ENCODE measurements at regions of chr6 and their contacts with region 1.

Region 1: GRCh38 chr6:30616811-30617564 is at the start of gene PPP1R10:
- DNase-seq: peak; percentile 98 to 100 (median 100)
- H3K4me3 ChIP-seq: peak within 1 kb of the TSS; percentile 91 to 95
- H3K4me3 Mint-ChIP-seq: peak within 1 kb of the TSS; percentile 97 to 100 (median 100)
- H3K27ac ChIP-seq: peak within 1 kb of the TSS; percentile 94
- H3K27ac Mint-ChIP-seq: peak within 1 kb of the TSS; percentile 100
- H3K4me1 ChIP-seq: peaks cover 45% of the 10 kb centered on the region
- H3K4me1 Mint-ChIP-seq: peaks cover 22 to 62% (median 35%) of the 10 kb centered on the region in 4 donors
- H3K27me3 ChIP-seq: no peaks in the 10 kb centered on the region
- H3K27me3 Mint-ChIP-seq: peaks cover 0 to 1% of the 10 kb centered on the region in 2 donors
- total RNA-seq, gene PPP1R10: 224 to 231 TPM

Region 2: GRCh38 chr6:30489081-30490025 is 127.6 kb before region 1 on chr6 and contains the start of gene HLA-E:
- CTCF ChIA-PET with region 1: interaction called, 22 read pairs
- POLR2A ChIA-PET with region 1: interaction called, 94 read pairs
- intact Hi-C with region 1: loop called (anchors 1 kb)
- DNase-seq: peak; percentile 92 to 98 (median 96)
- H3K4me3 ChIP-seq: peak within 1 kb of the TSS; percentile 98 to 99
- H3K4me3 Mint-ChIP-seq: peak within 1 kb of the TSS; percentile 98 to 99 (median 99)
- H3K27ac ChIP-seq: peak within 1 kb of the TSS; percentile 95
- H3K27ac Mint-ChIP-seq: peak within 1 kb of the TSS; percentile 97 to 99 (median 99)
- H3K4me1 ChIP-seq: peaks cover 30% of the 10 kb centered on the region
- H3K4me1 Mint-ChIP-seq: peaks cover 28 to 60% (median 44%) of the 10 kb centered on the region in 4 donors
- H3K27me3 ChIP-seq: no peaks in the 10 kb centered on the region
- H3K27me3 Mint-ChIP-seq: no peaks in the 10 kb centered on the region
- total RNA-seq, gene HLA-E: 1,097 to 1,122 TPM

Region 3: DNA sequence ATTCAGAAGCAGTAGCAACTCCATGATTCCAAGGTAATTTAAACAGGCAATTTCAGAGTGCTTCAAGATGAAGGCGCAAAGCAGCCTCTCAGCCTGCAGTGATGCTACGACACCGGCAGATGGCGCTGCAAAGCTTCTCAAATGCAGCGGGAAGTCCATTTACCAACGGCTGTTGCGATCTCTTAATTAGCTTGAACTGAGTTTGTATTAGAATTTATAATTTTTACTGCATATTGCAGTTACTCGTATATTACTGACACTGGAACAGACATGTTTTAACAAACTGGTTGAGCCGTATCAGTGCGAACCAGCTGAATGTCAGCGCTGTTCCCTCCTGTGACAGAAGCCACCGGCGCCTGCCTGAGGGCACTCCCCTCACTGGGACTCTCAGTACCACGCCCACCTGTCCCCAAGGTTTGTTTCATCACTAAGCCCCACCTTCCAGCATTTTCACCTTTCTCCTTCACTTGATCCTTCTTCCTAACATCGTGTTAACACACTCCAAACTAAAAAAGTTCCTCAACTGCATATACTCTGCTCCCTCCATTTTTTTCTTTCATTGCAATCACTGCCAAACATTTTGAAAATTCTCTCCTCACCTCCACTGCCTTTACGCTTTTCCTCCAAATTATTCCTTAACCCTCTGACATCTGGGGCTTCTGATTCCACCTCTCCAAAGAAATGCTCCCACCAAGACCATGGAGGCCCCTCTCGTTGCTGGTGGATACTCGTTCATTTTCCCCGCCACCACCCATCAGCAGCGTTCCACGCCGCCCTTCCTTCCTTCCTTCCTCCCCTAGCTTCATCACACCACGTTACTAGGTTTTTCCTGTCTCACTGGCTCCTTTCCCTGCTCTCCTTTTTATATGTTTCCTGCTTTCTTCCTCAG is 75.2 kb before region 1 on chr6:
- CTCF ChIA-PET with region 1: interaction called, 34 read pairs
- POLR2A ChIA-PET with region 1: interaction called, 102 read pairs
- intact Hi-C with region 1: no loop called
- DNase-seq: peak; percentile 81 to 83 (median 82)
- H3K4me3 ChIP-seq: peak overlapping the region; percentile 39 to 60
- H3K4me3 Mint-ChIP-seq: peak overlapping the region; percentile 84 to 94 (median 90)
- H3K27ac ChIP-seq: peak overlapping the region; percentile 46
- H3K27ac Mint-ChIP-seq: peak overlapping the region; percentile 79 to 99 (median 95)
- H3K4me1 ChIP-seq: peaks cover 37% of the 10 kb centered on the region
- H3K4me1 Mint-ChIP-seq: peaks cover 31 to 44% (median 31%) of the 10 kb centered on the region in 4 donors
- H3K27me3 ChIP-seq: no peaks in the 10 kb centered on the region
- H3K27me3 Mint-ChIP-seq: no peaks in the 10 kb centered on the region

Region 4: GRCh38 chr6:30578051-30578450 is 38.9 kb before region 1 on chr6:
- CTCF ChIA-PET with region 1: interaction called, 4 read pairs
- POLR2A ChIA-PET with region 1: interaction called, 15 read pairs
- intact Hi-C with region 1: no loop called
- DNase-seq: no peak
- H3K4me3 ChIP-seq: no peak overlapping the region
- H3K4me3 Mint-ChIP-seq: no peak overlapping the region
- H3K27ac ChIP-seq: no peak overlapping the region
- H3K27ac Mint-ChIP-seq: peak overlapping the region in 3 of 7 donors; percentile 32 to 70 (median 54)
- H3K4me1 ChIP-seq: peaks cover 18% of the 10 kb centered on the region
- H3K4me1 Mint-ChIP-seq: peaks cover 26 to 30% (median 27%) of the 10 kb centered on the region in 4 donors
- H3K27me3 ChIP-seq: no peaks in the 10 kb centered on the region
- H3K27me3 Mint-ChIP-seq: no peaks in the 10 kb centered on the region

Region 5: GRCh38 chr6:30672445-30673253 is 55.7 kb after region 1 on chr6 and contains the start of gene DHX16:
- CTCF ChIA-PET with region 1: interaction called, 7 read pairs
- POLR2A ChIA-PET with region 1: interaction called, 24 read pairs
- intact Hi-C with region 1: loop called (anchors 1 kb)
- DNase-seq: peak; percentile 84 to 89 (median 87)
- H3K4me3 ChIP-seq: peak within 1 kb of the TSS; percentile 89 to 95
- H3K4me3 Mint-ChIP-seq: peak within 1 kb of the TSS; percentile 80 to 94 (median 90)
- H3K27ac ChIP-seq: peak within 1 kb of the TSS; percentile 77
- H3K27ac Mint-ChIP-seq: peak within 1 kb of the TSS; percentile 69 to 97 (median 94)
- H3K4me1 ChIP-seq: peaks cover 20% of the 10 kb centered on the region
- H3K4me1 Mint-ChIP-seq: peaks cover 19 to 51% (median 35%) of the 10 kb centered on the region in 4 donors
- H3K27me3 ChIP-seq: no peaks in the 10 kb centered on the region
- H3K27me3 Mint-ChIP-seq: no peaks in the 10 kb centered on the region
- total RNA-seq, gene DHX16: 53.4 to 54.6 TPM

Region 6: DNA sequence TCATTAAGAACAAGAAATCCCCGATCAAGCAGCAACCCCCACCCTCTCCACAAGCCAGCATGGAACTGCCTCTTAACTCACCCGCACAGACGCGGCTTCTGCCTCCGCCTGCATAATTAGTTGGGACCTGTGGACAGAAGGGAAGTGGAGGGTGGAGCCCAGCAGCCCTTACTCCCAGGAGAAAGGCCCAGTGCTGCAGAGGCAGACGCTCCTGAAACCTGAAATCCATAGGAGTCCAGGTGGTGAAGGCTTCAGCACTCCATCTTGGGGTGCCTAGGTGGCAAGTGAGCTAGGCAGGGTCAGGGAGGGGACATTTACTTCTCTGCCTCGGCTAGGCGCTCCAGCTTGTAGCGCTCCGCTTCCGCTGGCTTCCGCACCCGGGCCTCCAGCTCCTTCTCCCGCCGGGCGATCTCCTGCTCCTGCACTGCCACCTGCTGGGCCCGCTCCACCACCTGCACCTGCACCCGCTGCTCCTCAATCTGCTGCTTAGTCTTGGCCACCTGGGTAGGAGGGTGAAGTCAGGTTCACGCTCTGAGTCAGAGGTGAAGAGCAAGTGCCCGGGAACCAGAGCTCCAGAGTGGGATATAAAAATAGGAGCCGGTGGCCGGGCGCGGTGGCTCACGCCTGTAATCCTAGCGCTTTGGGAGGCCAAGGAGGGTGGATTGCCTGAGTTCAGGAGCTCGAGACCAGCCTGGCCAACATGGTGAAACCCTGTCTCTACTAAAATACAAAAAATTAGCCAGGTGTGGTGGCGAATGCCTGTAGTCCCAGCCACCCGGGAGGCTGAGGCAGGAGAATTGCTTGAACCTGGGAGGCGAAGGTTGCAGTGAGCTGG is 113.8 kb after region 1 on chr6:
- CTCF ChIA-PET with region 1: interaction called, 26 read pairs
- POLR2A ChIA-PET with region 1: interaction called, 23 read pairs
- intact Hi-C with region 1: no loop called
- DNase-seq: peak; percentile 81 to 86 (median 82)
- H3K4me3 ChIP-seq: peak overlapping the region in 1 of 2 donors; percentile 35
- H3K4me3 Mint-ChIP-seq: peak overlapping the region in 6 of 8 donors; percentile 43 to 72 (median 58)
- H3K27ac ChIP-seq: no peak overlapping the region
- H3K27ac Mint-ChIP-seq: peak overlapping the region in 5 of 7 donors; percentile 69 to 84 (median 73)
- H3K4me1 ChIP-seq: peaks cover 23% of the 10 kb centered on the region
- H3K4me1 Mint-ChIP-seq: peaks cover 16 to 40% (median 31%) of the 10 kb centered on the region in 4 donors
- H3K27me3 ChIP-seq: no peaks in the 10 kb centered on the region
- H3K27me3 Mint-ChIP-seq: no peaks in the 10 kb centered on the region